ENCODE measurements at regions of chr12 and their contacts with region 1.

Region 1: GRCh38 chr12:123645878-123646277 is 12.2 kb downstream of the GTF2H3 start:
- DNase-seq: no peak
- H3K4me3 ChIP-seq: no peak overlapping the region
- H3K27ac ChIP-seq: no peak overlapping the region
- H3K4me1 ChIP-seq: no peaks in the 10 kb centered on the region
- H3K27me3 ChIP-seq: no peaks in the 10 kb centered on the region
- CTCF ChIP-seq: no peak

Region 2: DNA sequence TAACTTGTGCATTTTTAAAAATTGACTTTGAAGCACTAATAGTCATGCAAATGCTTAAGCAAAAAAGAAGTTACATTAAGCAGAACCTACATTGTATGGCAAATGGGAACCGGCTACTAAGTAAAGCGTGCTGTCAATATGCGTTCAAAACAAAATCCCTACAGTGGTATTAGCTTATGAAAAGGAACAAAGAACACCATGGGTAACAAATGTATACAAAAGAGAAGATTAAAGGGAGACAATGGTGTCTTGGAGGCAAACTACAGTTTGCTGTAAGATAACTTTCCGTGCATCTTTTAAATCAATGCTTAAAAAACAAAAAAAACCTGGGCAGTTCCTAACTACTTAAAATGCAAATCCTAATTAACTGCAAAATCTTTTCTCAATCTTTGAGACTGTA is 384.7 kb before region 1 on chr12:
- CTCF ChIA-PET with region 1: no interaction called
- POLR2A ChIA-PET with region 1: interaction called, 17 read pairs
- intact Hi-C with region 1: no loop called
- DNase-seq: no peak
- H3K4me3 ChIP-seq: no peak overlapping the region
- H3K27ac ChIP-seq: no peak overlapping the region
- H3K4me1 ChIP-seq: peaks cover 5% of the 10 kb centered on the region
- H3K27me3 ChIP-seq: no peaks in the 10 kb centered on the region
- CTCF ChIP-seq: no peak

Region 3: GRCh38 chr12:123388177-123388947 is 257.5 kb before region 1 on chr12:
- CTCF ChIA-PET with region 1: no interaction called
- POLR2A ChIA-PET with region 1: no interaction called
- intact Hi-C with region 1: no loop called
- DNase-seq: peak; percentile 85
- H3K4me3 ChIP-seq: peak overlapping the region; percentile 61
- H3K27ac ChIP-seq: peak overlapping the region; percentile 77
- H3K4me1 ChIP-seq: peaks cover 18% of the 10 kb centered on the region
- H3K27me3 ChIP-seq: no peaks in the 10 kb centered on the region
- CTCF ChIP-seq: no peak

Region 4: GRCh38 chr12:123614531-123614930 is 31.3 kb before region 1 on chr12:
- CTCF ChIA-PET with region 1: no interaction called
- POLR2A ChIA-PET with region 1: no interaction called
- intact Hi-C with region 1: no loop called
- DNase-seq: peak; percentile 68
- H3K4me3 ChIP-seq: no peak overlapping the region
- H3K27ac ChIP-seq: peak overlapping the region; percentile 35
- H3K4me1 ChIP-seq: no peaks in the 10 kb centered on the region
- H3K27me3 ChIP-seq: no peaks in the 10 kb centered on the region
- CTCF ChIP-seq: no peak

Region 5: DNA sequence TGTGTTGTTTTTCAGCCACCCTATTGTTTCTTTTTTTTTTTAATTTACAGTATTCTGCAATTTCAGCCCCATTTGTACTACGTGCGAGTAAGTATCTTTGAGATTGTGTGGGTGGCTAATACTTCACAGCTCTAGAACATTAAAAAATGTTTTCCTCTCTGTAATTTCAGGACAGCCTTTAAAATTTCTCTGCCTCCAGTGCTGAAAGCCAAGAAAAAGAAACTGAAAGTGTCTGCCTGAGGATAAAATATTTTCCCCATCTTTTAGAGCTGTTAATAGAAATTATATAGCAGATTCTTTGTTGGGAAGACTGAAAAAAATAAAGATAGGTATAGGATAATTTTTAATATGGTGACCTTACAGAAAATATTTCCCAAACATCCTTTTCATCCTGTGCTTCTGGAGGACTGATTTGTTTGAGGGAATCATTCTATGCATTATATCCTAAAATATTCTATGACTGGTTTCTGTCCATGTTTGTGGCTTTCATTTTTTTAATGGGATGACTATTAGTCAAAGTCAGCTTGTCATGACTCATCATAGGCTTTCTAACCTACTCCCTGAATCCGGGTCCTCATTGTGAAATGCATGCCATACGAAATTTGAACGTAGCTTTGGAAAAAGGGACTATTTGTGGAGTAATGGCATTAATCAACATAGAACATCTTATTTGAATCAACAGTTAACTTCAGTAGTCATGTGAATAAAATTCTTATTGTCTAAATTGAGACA is 14.3 kb after region 1 on chr12:
- CTCF ChIA-PET with region 1: no interaction called
- POLR2A ChIA-PET with region 1: no interaction called
- intact Hi-C with region 1: no loop called
- DNase-seq: peak; percentile 27
- H3K4me3 ChIP-seq: no peak overlapping the region
- H3K27ac ChIP-seq: no peak overlapping the region
- H3K4me1 ChIP-seq: no peaks in the 10 kb centered on the region
- H3K27me3 ChIP-seq: no peaks in the 10 kb centered on the region
- CTCF ChIP-seq: no peak

Measured in A673 (cell line).